Activated CD8-positive, alpha-beta T cell treated with anti-CD3 and anti-CD28 coated beads for 36 hours (primary cell): ENCODE measurements at regions of chr20 and their contacts with region 1.

Region 1: GRCh38 chr20:59222253-59223181 is 58.9 kb downstream of the ZNF831 start:
- DNase-seq: peak; percentile 86
- ATAC-seq: peak; percentile 96
- H3K4me3 Mint-ChIP-seq: peak overlapping the region; percentile 68
- H3K27ac Mint-ChIP-seq: peak overlapping the region; percentile 76
- H3K4me1 Mint-ChIP-seq: peaks cover 31% of the 10 kb centered on the region
- H3K27me3 Mint-ChIP-seq: no peaks in the 10 kb centered on the region
- CTCF ChIP-seq: peak; percentile 91

Region 2: GRCh38 chr20:58870239-58871014 is 352.1 kb before region 1 on chr20:
- CTCF ChIA-PET with region 1: interaction called, 9 read pairs
- POLR2A ChIA-PET with region 1: interaction called, 3 read pairs
- intact Hi-C with region 1: loop called (anchors 10 kb)
- DNase-seq: peak; percentile 72
- ATAC-seq: peak; percentile 76
- H3K4me3 Mint-ChIP-seq: no peak overlapping the region
- H3K27ac Mint-ChIP-seq: no peak overlapping the region
- H3K4me1 Mint-ChIP-seq: peaks cover 11% of the 10 kb centered on the region
- H3K27me3 Mint-ChIP-seq: peaks cover 6% of the 10 kb centered on the region
- CTCF ChIP-seq: peak; percentile 88

Region 3: GRCh38 chr20:59082077-59082740 is 140.3 kb before region 1 on chr20:
- CTCF ChIA-PET with region 1: interaction called, 47 read pairs
- POLR2A ChIA-PET with region 1: no interaction called
- intact Hi-C with region 1: loop called (anchors 5 kb)
- DNase-seq: no peak
- ATAC-seq: no peak
- H3K4me3 Mint-ChIP-seq: no peak overlapping the region
- H3K27ac Mint-ChIP-seq: no peak overlapping the region
- H3K4me1 Mint-ChIP-seq: peaks cover 15% of the 10 kb centered on the region
- H3K27me3 Mint-ChIP-seq: peaks cover 2% of the 10 kb centered on the region
- CTCF ChIP-seq: peak; percentile 38

Region 4: GRCh38 chr20:59253779-59254319 is 31.3 kb after region 1 on chr20:
- CTCF ChIA-PET with region 1: interaction called, 12 read pairs
- POLR2A ChIA-PET with region 1: no interaction called
- intact Hi-C with region 1: no loop called
- DNase-seq: peak; percentile 75
- ATAC-seq: peak; percentile 72
- H3K4me3 Mint-ChIP-seq: peak overlapping the region; percentile 24
- H3K27ac Mint-ChIP-seq: peak overlapping the region; percentile 91
- H3K4me1 Mint-ChIP-seq: peaks cover 64% of the 10 kb centered on the region
- H3K27me3 Mint-ChIP-seq: no peaks in the 10 kb centered on the region
- CTCF ChIP-seq: no peak

Region 5: DNA sequence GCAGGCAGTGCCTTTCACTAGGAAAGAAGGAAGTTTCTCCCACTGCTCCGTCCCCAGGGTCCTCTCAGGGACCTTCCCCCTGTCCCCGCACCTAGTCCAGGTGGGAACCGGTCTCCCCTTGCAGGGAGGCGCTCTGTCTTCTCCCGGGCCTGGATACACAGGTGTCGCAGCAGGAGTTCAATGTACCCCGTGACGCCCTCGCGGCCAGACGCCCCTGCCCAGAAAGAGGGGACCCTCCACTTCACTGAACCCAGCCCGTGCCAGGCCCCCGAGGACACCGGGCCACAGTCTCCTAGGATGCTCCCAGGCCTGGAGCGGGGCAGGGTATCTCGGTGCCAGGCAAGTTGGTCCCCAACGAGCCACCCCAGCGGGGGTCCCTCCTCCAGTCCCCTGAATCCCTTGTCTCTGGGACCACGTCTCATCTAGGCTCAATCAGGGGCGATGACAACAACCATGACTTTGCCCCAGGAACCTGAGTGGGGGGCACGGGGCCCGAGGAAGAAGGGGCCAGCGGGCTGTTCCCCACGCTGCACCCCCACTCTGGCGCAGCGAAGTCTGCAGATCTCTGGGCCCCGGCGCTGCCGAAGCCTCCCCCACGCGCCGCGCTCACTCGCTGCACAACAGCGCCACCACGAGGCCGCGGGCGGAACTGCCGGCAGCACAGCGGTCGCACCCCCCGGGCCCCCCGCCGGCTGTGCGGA is 180.9 kb after region 1 on chr20:
- CTCF ChIA-PET with region 1: interaction called, 22 read pairs
- POLR2A ChIA-PET with region 1: no interaction called
- intact Hi-C with region 1: loop called (anchors 5 kb)
- DNase-seq: peak; percentile 78
- ATAC-seq: peak; percentile 83
- H3K4me3 Mint-ChIP-seq: no peak overlapping the region
- H3K27ac Mint-ChIP-seq: peak overlapping the region; percentile 44
- H3K4me1 Mint-ChIP-seq: peaks cover 2% of the 10 kb centered on the region
- H3K27me3 Mint-ChIP-seq: peaks cover 9% of the 10 kb centered on the region
- CTCF ChIP-seq: peak; percentile 100